ENCODE measurements at regions of chr5 and their contacts with region 1.

Region 1: DNA sequence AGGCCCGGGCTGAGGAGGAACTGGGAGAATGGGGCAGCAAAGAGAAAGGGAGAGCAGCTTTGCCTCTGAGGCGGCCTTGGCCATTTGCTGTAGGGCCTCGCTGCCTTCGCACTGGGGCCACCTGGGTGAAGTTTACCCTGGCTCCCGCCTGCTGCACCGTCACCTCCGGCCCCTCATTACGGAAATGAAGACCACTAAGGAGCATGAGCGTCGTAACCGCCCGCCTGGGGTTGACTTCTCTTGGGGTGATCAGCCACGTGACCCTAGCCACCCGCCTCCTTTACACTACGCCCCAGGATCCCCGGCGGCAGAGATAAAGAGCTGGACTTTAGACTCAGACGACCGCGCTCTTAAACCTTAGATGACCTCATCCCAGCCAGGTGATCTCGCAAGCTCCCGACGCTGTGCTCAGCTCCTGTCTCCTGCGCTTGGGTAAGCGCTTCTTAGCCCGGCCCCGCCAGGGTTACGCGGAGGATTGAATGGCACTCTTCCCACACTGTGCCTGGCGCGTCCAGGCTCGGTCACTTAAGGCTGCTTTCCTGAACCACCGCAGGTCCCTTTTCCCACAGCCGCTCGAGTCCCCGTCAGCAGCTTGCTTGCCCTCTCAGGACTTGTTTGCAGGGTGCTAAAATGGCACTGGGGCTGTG is 107.9 kb upstream of the LARP1 start:
- DNase-seq: no peak
- ATAC-seq: no peak
- H3K4me3 ChIP-seq: no peak overlapping the region
- H3K27ac ChIP-seq: no peak overlapping the region
- H3K4me1 ChIP-seq: no peaks in the 10 kb centered on the region
- H3K27me3 ChIP-seq: no peaks in the 10 kb centered on the region
- CTCF ChIP-seq: no peak
- POLR2A ChIP-seq: no peak
- RAD21 ChIP-seq: no peak

Region 2: DNA sequence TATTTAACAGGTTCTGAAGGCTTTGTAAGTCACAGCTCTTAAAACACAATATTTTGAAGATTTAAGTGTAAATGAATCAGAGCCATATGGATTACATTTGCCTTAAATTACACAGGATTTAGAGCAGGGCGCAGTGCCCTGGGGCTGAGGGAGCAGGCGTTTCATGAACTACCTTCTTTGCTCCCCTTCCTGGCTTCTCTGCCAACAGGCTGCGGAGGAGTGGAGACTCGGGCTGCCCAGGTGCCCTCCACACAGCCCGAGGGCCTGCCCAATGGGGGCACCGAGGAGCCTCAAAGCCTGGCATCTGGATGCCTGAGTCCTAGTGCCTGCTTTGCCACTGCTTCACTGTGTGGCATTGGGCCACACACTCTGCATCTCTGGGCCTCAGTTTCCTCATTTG is 78.6 kb before region 1 on chr5:
- CTCF ChIA-PET with region 1: no interaction called
- POLR2A ChIA-PET with region 1: no interaction called
- RAD21 ChIA-PET with region 1: no interaction called
- intact Hi-C with region 1: no loop called
- DNase-seq: no peak
- ATAC-seq: no peak
- H3K4me3 ChIP-seq: no peak overlapping the region
- H3K27ac ChIP-seq: no peak overlapping the region
- H3K4me1 ChIP-seq: no peaks in the 10 kb centered on the region
- H3K27me3 ChIP-seq: no peaks in the 10 kb centered on the region
- CTCF ChIP-seq: no peak
- POLR2A ChIP-seq: no peak
- RAD21 ChIP-seq: no peak

Region 3: GRCh38 chr5:154754460-154755360 is 107.5 kb after region 1 on chr5:
- CTCF ChIA-PET with region 1: no interaction called
- POLR2A ChIA-PET with region 1: no interaction called
- RAD21 ChIA-PET with region 1: no interaction called
- intact Hi-C with region 1: loop called (anchors 1 kb)
- DNase-seq: peak; percentile 97
- ATAC-seq: peak; percentile 88
- H3K4me3 ChIP-seq: peak overlapping the region; percentile 90 to 92
- H3K27ac ChIP-seq: peak overlapping the region; percentile 95
- H3K4me1 ChIP-seq: peaks cover 19 to 42% of the 10 kb centered on the region in 2 experiments
- H3K27me3 ChIP-seq: no peaks in the 10 kb centered on the region
- CTCF ChIP-seq: peak in 2 of 3 experiments; percentile 22 to 32; a peak in 2 of 6 replicates
- POLR2A ChIP-seq: peak; percentile 52
- RAD21 ChIP-seq: no peak

Region 4: GRCh38 chr5:154811653-154812365 is 164.6 kb after region 1 on chr5:
- CTCF ChIA-PET with region 1: no interaction called
- POLR2A ChIA-PET with region 1: interaction called, 4 read pairs
- RAD21 ChIA-PET with region 1: interaction called in 1 of 2 experiments, 5 read pairs
- intact Hi-C with region 1: loop called (anchors 1 kb)
- DNase-seq: peak; percentile 59
- ATAC-seq: peak; percentile 90
- H3K4me3 ChIP-seq: no peak overlapping the region
- H3K27ac ChIP-seq: no peak overlapping the region
- H3K4me1 ChIP-seq: no peaks in the 10 kb centered on the region
- H3K27me3 ChIP-seq: no peaks in the 10 kb centered on the region
- CTCF ChIP-seq: peak; percentile 72 to 95 (median 88); a peak in 5 of 6 replicates
- POLR2A ChIP-seq: no peak
- RAD21 ChIP-seq: peak; percentile 83

Region 5: GRCh38 chr5:154868702-154869101 is 221.5 kb after region 1 on chr5:
- CTCF ChIA-PET with region 1: interaction called, 6 read pairs
- POLR2A ChIA-PET with region 1: no interaction called
- RAD21 ChIA-PET with region 1: no interaction called
- intact Hi-C with region 1: loop called (anchors 1 kb)
- DNase-seq: no peak
- ATAC-seq: peak; percentile 67
- H3K4me3 ChIP-seq: no peak overlapping the region
- H3K27ac ChIP-seq: no peak overlapping the region
- H3K4me1 ChIP-seq: no peaks in the 10 kb centered on the region
- H3K27me3 ChIP-seq: no peaks in the 10 kb centered on the region
- CTCF ChIP-seq: peak in 2 of 3 experiments; percentile 19 to 29; a peak in 1 of 6 replicates
- POLR2A ChIP-seq: no peak
- RAD21 ChIP-seq: peak; percentile 63

Region 6: DNA sequence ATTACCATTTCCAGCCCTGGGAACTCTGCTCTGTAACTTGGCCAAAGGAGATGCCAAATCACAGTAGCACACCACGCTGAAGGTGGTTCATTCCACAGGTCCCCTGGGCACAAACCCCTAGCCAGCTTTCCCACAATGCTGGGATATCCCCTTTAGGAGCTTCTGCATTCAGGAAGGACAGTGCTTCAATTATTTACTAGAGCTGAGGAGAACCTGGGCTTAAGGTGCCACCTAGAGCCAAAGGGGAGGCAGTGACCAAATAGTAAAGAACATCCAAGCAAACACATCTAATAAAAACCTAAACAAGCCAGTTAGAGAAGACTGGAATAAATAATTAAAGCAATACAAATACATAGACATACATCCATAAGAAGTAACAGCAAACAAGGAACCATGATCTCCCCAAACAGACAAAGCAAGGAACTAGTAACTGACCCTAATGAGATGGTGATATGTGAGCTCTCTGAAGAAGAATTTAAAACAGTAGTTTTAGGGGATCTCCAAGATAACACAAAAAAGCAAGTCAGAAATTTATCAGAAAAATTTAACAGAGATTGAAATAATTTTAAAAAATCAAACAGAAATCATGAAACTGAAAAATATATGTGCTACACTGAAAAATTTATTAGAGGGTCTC is 380.9 kb after region 1 on chr5:
- CTCF ChIA-PET with region 1: interaction called, 15 read pairs
- POLR2A ChIA-PET with region 1: no interaction called
- RAD21 ChIA-PET with region 1: no interaction called
- intact Hi-C with region 1: no loop called
- DNase-seq: peak; percentile 27
- ATAC-seq: peak; percentile 96
- H3K4me3 ChIP-seq: no peak overlapping the region
- H3K27ac ChIP-seq: no peak overlapping the region
- H3K4me1 ChIP-seq: no peaks in the 10 kb centered on the region
- H3K27me3 ChIP-seq: no peaks in the 10 kb centered on the region; the same call in 1 of the 2 replicates
- CTCF ChIP-seq: peak; percentile 52 to 56 (median 54); a peak in 5 of 6 replicates
- POLR2A ChIP-seq: no peak
- RAD21 ChIP-seq: peak; percentile 78

Region 7: DNA sequence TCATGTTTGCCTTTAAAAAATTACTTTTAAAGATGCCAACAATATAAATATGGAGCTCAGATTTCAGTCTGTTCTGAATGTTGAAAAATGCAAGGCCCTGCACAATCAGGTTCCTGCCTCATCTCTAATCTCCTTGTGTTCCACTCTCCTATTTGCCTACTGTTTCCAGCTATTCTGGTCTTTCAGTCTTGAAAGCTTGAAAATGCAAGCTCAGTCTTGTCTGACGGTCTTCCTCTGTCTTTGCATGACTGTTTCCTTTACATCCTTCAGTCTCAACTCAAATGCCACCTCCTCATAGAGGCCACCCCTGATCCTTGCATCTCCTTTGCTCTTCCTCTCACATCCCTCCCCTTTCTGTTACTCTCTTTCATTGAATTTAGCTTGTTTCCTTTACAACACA is 721.3 kb after region 1 on chr5:
- CTCF ChIA-PET with region 1: no interaction called
- POLR2A ChIA-PET with region 1: no interaction called
- RAD21 ChIA-PET with region 1: no interaction called
- intact Hi-C with region 1: no loop called
- DNase-seq: no peak
- ATAC-seq: no peak
- H3K4me3 ChIP-seq: no peak overlapping the region
- H3K27ac ChIP-seq: no peak overlapping the region
- H3K4me1 ChIP-seq: no peaks in the 10 kb centered on the region
- H3K27me3 ChIP-seq: no peaks in the 10 kb centered on the region
- CTCF ChIP-seq: no peak
- POLR2A ChIP-seq: no peak
- RAD21 ChIP-seq: no peak

Region 8: DNA sequence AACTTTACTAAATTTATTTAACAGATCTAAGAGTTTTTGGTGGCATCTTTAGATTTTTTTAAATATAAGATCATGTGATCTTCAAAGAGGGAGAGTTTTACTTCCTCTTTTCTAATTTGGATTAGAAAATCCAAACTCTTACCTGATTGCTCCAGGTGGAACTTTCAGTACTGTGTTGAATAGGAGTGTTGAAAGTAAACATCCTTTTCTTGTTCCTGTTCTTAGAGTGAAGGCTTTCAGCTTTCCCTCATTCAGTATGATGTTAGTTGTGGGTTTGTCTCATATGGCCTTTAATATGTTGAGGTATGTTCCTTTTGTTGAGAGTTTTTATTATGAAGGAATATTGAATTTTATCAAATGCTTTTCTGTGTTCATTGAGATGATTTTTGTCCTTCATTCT is 1029.7 kb after region 1 on chr5:
- CTCF ChIA-PET with region 1: no interaction called
- POLR2A ChIA-PET with region 1: no interaction called
- RAD21 ChIA-PET with region 1: no interaction called
- intact Hi-C with region 1: no loop called
- DNase-seq: no peak
- ATAC-seq: no peak
- H3K4me3 ChIP-seq: no peak overlapping the region
- H3K27ac ChIP-seq: no peak overlapping the region
- H3K4me1 ChIP-seq: no peaks in the 10 kb centered on the region
- H3K27me3 ChIP-seq: no peaks in the 10 kb centered on the region
- CTCF ChIP-seq: no peak
- POLR2A ChIP-seq: no peak
- RAD21 ChIP-seq: no peak